ENCODE measurements at regions of chr14 and their contacts with region 1.

Region 1: DNA sequence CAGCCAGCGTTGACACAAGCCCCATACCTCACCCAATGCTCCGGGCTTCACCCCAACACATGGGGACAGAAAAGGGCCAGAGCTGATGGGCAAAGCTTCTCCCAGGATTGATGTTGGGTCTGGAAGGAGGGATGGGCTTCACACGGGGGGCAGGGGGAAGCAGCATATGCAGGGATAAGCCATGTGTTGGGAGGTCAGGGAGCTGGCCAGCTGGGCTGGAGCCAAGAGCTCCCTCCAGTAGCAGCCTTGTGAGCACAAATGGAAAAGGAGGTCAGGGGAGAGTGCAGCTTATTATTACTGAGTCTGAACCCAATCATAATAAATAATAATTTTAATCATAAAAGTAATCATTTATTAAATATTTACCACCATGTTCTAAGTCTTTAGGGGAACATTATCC is 9.3 kb downstream of the PLEKHD1 start:
- DNase-seq: no peak
- H3K4me3 ChIP-seq: no peak overlapping the region
- H3K27ac ChIP-seq: no peak overlapping the region
- H3K4me1 ChIP-seq: no peaks in the 10 kb centered on the region
- H3K27me3 ChIP-seq: peaks cover 0 to 5% of the 10 kb centered on the region in 2 experiments
- CTCF ChIP-seq: no peak
- POLR2A ChIP-seq: no peak

Region 2: GRCh38 chr14:68718023-68718995 is 775.5 kb before region 1 on chr14:
- CTCF ChIA-PET with region 1: no interaction called
- POLR2A ChIA-PET with region 1: no interaction called
- dilution Hi-C with region 1: no loop called
- intact Hi-C with region 1: no loop called
- DNase-seq: no peak
- H3K4me3 ChIP-seq: no peak overlapping the region
- H3K27ac ChIP-seq: no peak overlapping the region
- H3K4me1 ChIP-seq: no peaks in the 10 kb centered on the region
- H3K27me3 ChIP-seq: no peaks in the 10 kb centered on the region
- CTCF ChIP-seq: peak; percentile 43 to 46
- POLR2A ChIP-seq: no peak

Region 3: DNA sequence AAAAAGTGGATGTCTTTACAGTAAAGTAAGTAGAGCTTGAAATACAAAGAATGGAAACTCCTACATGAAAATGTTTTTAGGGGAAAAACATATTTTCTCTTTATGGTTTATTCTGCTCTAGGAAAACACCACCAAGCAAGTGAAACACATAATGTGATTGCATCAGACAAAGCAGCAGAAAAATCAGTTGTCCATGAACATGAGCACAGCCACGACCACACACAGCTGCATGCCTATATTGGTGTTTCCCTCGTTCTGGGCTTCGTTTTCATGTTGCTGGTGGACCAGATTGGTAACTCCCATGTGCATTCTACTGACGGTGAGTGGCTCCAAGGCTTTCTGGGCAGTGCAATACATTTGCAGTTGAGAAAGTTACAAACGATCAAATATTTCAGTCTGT is 51.8 kb before region 1 on chr14:
- CTCF ChIA-PET with region 1: no interaction called
- POLR2A ChIA-PET with region 1: no interaction called
- dilution Hi-C with region 1: no loop called
- intact Hi-C with region 1: no loop called
- DNase-seq: no peak
- H3K4me3 ChIP-seq: no peak overlapping the region
- H3K27ac ChIP-seq: no peak overlapping the region
- H3K4me1 ChIP-seq: peaks cover 5% of the 10 kb centered on the region
- H3K27me3 ChIP-seq: no peaks in the 10 kb centered on the region
- CTCF ChIP-seq: no peak
- POLR2A ChIP-seq: no peak

Region 4: GRCh38 chr14:69505338-69506240 is 11.8 kb after region 1 on chr14:
- CTCF ChIA-PET with region 1: interaction called, 10 read pairs
- POLR2A ChIA-PET with region 1: no interaction called
- dilution Hi-C with region 1: no loop called
- intact Hi-C with region 1: no loop called
- DNase-seq: no peak
- H3K4me3 ChIP-seq: no peak overlapping the region
- H3K27ac ChIP-seq: no peak overlapping the region
- H3K4me1 ChIP-seq: no peaks in the 10 kb centered on the region
- H3K27me3 ChIP-seq: peaks cover 4 to 5% of the 10 kb centered on the region in 2 experiments
- CTCF ChIP-seq: no peak
- POLR2A ChIP-seq: no peak